GM12878 (cell line): ENCODE measurements at regions of chr3 and their contacts with region 1.

Region 1: DNA sequence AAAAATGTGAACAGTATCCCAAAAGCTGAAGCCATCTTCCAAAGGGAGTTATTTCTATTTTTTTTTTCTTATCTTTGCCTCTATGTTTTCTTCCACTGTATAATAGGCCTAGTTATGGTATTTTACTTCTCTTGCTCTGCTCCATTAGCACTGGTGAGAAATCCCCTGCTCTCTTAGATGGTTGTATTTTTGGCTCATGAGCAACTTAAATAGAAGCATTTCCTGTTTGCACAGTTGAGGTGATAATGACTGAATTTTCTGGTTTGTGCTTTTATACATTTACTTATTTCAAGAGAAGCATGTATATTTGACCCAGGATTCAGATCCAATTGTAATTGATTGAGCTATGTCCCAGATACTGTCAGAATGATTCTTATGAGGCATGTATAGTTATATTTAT is 61.6 kb upstream of the CD200R1L start:
- DNase-seq: peak; percentile 64
- ATAC-seq: peak; percentile 100
- H3K4me3 ChIP-seq: peak overlapping the region; percentile 35; the same call in 1 of the 2 replicates
- H3K27ac ChIP-seq: peak overlapping the region; percentile 73
- H3K4me1 ChIP-seq: peaks cover 15% of the 10 kb centered on the region
- H3K27me3 ChIP-seq: no peaks in the 10 kb centered on the region
- CTCF ChIP-seq: no peak
- EP300 ChIP-seq: peak; percentile 66 to 78; a peak in 3 of 4 replicates
- POLR2A ChIP-seq: no peak
- RAD21 ChIP-seq: no peak

Region 2: DNA sequence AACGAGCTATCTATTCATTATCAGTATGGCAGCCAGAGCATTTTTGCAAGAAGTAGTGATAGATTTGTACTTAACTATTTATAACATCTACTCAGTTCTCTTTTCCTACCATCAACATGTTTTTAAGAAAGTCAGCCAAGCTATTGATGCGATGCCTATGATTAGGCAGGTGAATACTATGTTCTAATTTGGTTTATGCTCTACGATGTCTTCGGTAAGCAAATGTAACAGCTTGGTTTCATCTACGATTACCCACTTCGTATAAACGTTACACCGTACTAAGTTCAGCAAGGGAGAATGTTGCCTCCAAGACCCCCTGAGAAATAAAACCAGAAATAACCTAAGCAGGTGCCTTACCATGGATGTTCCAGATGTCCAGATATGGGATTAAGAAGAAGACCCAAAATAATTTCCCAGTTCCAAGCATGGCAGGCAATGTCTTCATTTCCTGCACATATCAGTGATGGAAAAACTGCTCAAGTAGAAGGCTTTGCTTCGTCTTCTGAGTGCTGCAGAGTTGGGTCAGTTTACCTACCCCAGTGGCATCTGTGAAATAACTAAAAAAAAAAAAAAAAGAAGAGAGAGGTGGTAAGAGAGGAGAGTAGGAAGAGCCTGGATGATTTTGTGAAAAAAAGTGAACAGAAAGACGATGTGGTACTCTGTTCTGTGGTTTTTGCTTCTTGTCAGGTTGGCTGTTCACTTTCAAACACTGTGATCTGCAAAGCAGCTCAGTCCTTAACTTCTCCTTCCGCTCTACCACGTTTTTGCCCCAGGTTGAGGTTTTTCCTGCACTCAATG is 409.1 kb before region 1 on chr3 and contains the start of gene BTLA:
- CTCF ChIA-PET with region 1: no interaction called
- POLR2A ChIA-PET with region 1: no interaction called
- RAD21 ChIA-PET with region 1: no interaction called
- SMC1A ChIA-PET with region 1: no interaction called
- in situ Hi-C with region 1: no loop called
- intact Hi-C with region 1: no loop called
- DNase-seq: peak; percentile 79
- ATAC-seq: peak; percentile 64
- H3K4me3 ChIP-seq: peak within 1 kb of the TSS; percentile 89
- H3K27ac ChIP-seq: peak within 1 kb of the TSS; percentile 87
- H3K4me1 ChIP-seq: peaks cover 13% of the 10 kb centered on the region
- H3K27me3 ChIP-seq: no peaks in the 10 kb centered on the region
- CTCF ChIP-seq: no peak
- EP300 ChIP-seq: peak in 1 of 2 experiments; percentile 39; a peak in 1 of 4 replicates
- POLR2A ChIP-seq: peak; percentile 52; the same call in 1 of the 2 replicates
- RAD21 ChIP-seq: no peak
- polyA plus RNA-seq, gene BTLA: 101 to 134 TPM

Region 3: DNA sequence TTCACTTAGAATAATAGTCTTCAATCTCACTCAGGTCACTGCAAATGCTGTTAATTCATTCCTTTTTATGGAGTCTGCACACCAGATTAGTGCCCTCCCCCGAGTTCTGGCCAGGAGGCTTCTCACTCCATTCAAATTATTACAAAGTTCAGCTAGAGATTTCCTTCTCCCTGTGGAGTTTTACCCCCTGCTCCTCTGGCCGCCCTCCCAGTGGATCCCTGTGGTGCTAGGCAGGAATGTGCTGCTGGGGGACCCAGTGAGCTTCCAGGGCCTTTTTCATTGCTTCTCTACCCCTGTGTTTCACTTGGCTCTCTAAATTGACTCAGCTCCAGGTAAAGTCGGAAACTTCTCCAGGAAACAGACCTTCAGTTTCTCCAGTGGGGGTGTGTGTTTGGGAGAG is 18.9 kb before region 1 on chr3:
- CTCF ChIA-PET with region 1: no interaction called
- POLR2A ChIA-PET with region 1: no interaction called
- RAD21 ChIA-PET with region 1: interaction called, 3 read pairs
- SMC1A ChIA-PET with region 1: interaction called, 10 read pairs
- in situ Hi-C with region 1: no loop called
- intact Hi-C with region 1: no loop called
- DNase-seq: no peak
- ATAC-seq: no peak
- H3K4me3 ChIP-seq: no peak overlapping the region
- H3K27ac ChIP-seq: no peak overlapping the region
- H3K4me1 ChIP-seq: no peaks in the 10 kb centered on the region
- H3K27me3 ChIP-seq: peaks cover 0 to 2% of the 10 kb centered on the region in 2 experiments; a peak in 1 of 4 replicates
- CTCF ChIP-seq: no peak
- EP300 ChIP-seq: no peak
- POLR2A ChIP-seq: no peak
- RAD21 ChIP-seq: no peak

Region 4: GRCh38 chr3:112925969-112926368 is 17.7 kb after region 1 on chr3:
- CTCF ChIA-PET with region 1: interaction called, 3 read pairs
- POLR2A ChIA-PET with region 1: interaction called, 3 read pairs
- RAD21 ChIA-PET with region 1: interaction called, 7 read pairs
- SMC1A ChIA-PET with region 1: interaction called, 10 read pairs
- in situ Hi-C with region 1: no loop called
- intact Hi-C with region 1: no loop called
- DNase-seq: no peak
- ATAC-seq: peak; percentile 62
- H3K4me3 ChIP-seq: peak overlapping the region; percentile 28; the same call in 1 of the 2 replicates
- H3K27ac ChIP-seq: peak overlapping the region; percentile 27
- H3K4me1 ChIP-seq: no peaks in the 10 kb centered on the region; the same call in none of the 2 replicates
- H3K27me3 ChIP-seq: no peaks in the 10 kb centered on the region
- CTCF ChIP-seq: no peak
- EP300 ChIP-seq: no peak
- POLR2A ChIP-seq: no peak
- RAD21 ChIP-seq: no peak

Region 5: GRCh38 chr3:113051302-113051711 is 143.1 kb after region 1 on chr3:
- CTCF ChIA-PET with region 1: no interaction called
- POLR2A ChIA-PET with region 1: no interaction called
- RAD21 ChIA-PET with region 1: no interaction called
- SMC1A ChIA-PET with region 1: no interaction called
- in situ Hi-C with region 1: no loop called
- intact Hi-C with region 1: no loop called
- DNase-seq: peak; percentile 63
- ATAC-seq: peak; percentile 99
- H3K4me3 ChIP-seq: no peak overlapping the region
- H3K27ac ChIP-seq: no peak overlapping the region
- H3K4me1 ChIP-seq: peaks cover 3% of the 10 kb centered on the region
- H3K27me3 ChIP-seq: no peaks in the 10 kb centered on the region
- CTCF ChIP-seq: peak; percentile 85 to 93 (median 93); a peak in 5 of 6 replicates
- EP300 ChIP-seq: peak; percentile 33 to 45; a peak in 1 of 4 replicates
- POLR2A ChIP-seq: no peak
- RAD21 ChIP-seq: peak; percentile 93

Region 6: DNA sequence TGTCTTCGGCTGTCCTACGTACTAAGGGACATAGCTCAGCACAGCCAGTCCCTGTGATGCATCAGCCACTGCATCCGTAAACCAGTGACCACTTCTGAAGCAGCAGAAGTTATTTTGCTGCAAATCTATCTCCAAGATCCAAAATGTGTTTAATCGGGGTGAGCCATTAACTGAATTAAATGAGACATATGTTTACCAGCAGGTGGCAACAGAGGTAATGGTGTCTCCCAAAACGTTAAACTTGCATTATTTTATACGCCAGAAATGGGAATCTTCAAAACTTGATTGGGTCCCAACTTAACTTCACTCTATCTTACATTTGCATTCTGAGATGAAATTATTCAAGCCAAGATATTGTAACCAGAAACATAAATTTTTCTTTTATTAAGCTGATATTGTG is 227.8 kb after region 1 on chr3:
- CTCF ChIA-PET with region 1: no interaction called
- POLR2A ChIA-PET with region 1: no interaction called
- RAD21 ChIA-PET with region 1: no interaction called
- SMC1A ChIA-PET with region 1: no interaction called
- in situ Hi-C with region 1: no loop called
- intact Hi-C with region 1: no loop called
- DNase-seq: no peak
- ATAC-seq: 0 out of 3 replicates have a peak, but pooled peaks have one; percentile 31
- H3K4me3 ChIP-seq: no peak overlapping the region
- H3K27ac ChIP-seq: no peak overlapping the region
- H3K4me1 ChIP-seq: no peaks in the 10 kb centered on the region
- H3K27me3 ChIP-seq: no peaks in the 10 kb centered on the region
- CTCF ChIP-seq: peak; percentile 40 to 42 (median 42); a peak in 4 of 6 replicates
- EP300 ChIP-seq: no peak
- POLR2A ChIP-seq: no peak
- RAD21 ChIP-seq: peak; percentile 40; the same call in 1 of the 2 replicates

Region 7: DNA sequence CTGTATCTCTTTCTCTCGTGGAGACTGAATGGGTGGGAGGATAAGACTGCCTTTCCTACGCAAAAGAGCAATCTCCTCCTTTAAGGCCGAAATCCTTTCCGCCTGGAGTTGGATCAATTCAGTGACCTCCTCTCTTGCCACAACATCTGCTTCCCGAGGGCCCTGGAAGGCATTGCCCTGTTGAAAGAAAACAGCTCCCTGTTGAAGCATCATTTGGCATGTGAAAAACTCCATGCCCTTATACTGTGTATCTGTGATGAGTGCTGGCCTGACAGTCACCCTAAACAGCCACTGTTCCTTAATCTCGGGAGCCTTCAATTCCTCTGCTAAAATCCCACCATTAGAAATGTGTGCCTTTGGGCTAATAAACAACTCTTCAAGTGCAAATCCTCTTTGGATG is 383.3 kb after region 1 on chr3:
- CTCF ChIA-PET with region 1: no interaction called
- POLR2A ChIA-PET with region 1: no interaction called
- RAD21 ChIA-PET with region 1: no interaction called
- SMC1A ChIA-PET with region 1: no interaction called
- in situ Hi-C with region 1: no loop called
- intact Hi-C with region 1: no loop called
- DNase-seq: no peak
- ATAC-seq: no peak
- H3K4me3 ChIP-seq: no peak overlapping the region
- H3K27ac ChIP-seq: no peak overlapping the region
- H3K4me1 ChIP-seq: no peaks in the 10 kb centered on the region
- H3K27me3 ChIP-seq: no peaks in the 10 kb centered on the region
- CTCF ChIP-seq: no peak
- EP300 ChIP-seq: no peak
- POLR2A ChIP-seq: no peak
- RAD21 ChIP-seq: no peak